ENCODE measurements at regions of chr11 and their contacts with region 1.

Region 1: DNA sequence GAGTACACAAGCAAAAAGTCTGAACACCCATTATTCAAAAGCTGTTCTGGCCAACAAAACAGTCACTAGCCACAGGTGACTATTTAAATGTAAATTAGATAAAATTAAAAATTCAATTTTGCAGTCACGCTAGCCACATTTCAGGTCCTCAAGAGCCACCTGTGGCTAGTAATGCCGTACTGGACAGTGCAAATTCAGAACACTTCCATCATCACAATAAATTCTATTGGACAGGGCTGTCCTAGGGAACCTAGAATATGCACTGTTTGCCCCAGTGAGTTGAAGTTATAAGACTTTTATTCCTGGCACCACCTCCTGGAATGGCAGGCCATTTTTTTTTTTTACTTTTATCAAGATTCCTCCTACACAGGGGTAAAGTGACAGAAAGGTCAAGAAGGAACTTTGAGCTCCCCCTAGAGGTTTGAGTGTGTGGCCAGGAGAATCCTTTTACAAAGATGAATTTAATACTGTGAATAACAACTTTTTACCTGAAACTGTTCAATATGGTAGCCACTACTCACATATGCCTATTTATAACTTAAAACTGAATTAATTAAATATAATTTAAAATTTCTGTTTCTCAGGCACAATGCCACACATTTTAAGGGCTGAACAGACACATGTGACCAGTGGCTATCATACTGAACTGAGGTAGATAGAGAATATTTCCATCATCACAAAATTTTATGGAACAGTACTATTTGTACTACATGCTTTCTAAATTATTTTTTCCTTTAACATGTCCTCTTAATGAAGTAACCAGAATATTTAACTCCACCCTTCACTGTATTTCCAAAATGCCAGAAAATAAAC is 6.5 kb downstream of the MSANTD2 start:
- DNase-seq: peak; percentile 31 to 76 (median 48)
- ATAC-seq: peak; percentile 93
- H3K4me3 ChIP-seq: no peak overlapping the region
- H3K27ac ChIP-seq: no peak overlapping the region
- H3K4me1 ChIP-seq: 0 out of 5 replicates have a peak, but pooled peaks cover 0 to 3% of the 10 kb centered on the region in 2 experiments
- H3K27me3 ChIP-seq: no peaks in the 10 kb centered on the region
- CTCF ChIP-seq: peak; percentile 59 to 86 (median 72); a peak in 5 of 6 replicates
- EP300 ChIP-seq: no peak; the same call in 1 of the 2 replicates
- POLR2A ChIP-seq: no peak
- RAD21 ChIP-seq: peak; percentile 67 to 74

Region 2: GRCh38 chr11:124605719-124606118 is 188.0 kb before region 1 on chr11:
- CTCF ChIA-PET with region 1: no interaction called
- POLR2A ChIA-PET with region 1: no interaction called
- in situ Hi-C with region 1: no loop called
- intact Hi-C with region 1: no loop called
- DNase-seq: no peak
- ATAC-seq: no peak
- H3K4me3 ChIP-seq: no peak overlapping the region
- H3K27ac ChIP-seq: no peak overlapping the region
- H3K4me1 ChIP-seq: no peaks in the 10 kb centered on the region; a peak in 2 of 5 replicates
- H3K27me3 ChIP-seq: no peaks in the 10 kb centered on the region
- CTCF ChIP-seq: no peak
- EP300 ChIP-seq: no peak
- POLR2A ChIP-seq: no peak
- RAD21 ChIP-seq: no peak

Region 3: DNA sequence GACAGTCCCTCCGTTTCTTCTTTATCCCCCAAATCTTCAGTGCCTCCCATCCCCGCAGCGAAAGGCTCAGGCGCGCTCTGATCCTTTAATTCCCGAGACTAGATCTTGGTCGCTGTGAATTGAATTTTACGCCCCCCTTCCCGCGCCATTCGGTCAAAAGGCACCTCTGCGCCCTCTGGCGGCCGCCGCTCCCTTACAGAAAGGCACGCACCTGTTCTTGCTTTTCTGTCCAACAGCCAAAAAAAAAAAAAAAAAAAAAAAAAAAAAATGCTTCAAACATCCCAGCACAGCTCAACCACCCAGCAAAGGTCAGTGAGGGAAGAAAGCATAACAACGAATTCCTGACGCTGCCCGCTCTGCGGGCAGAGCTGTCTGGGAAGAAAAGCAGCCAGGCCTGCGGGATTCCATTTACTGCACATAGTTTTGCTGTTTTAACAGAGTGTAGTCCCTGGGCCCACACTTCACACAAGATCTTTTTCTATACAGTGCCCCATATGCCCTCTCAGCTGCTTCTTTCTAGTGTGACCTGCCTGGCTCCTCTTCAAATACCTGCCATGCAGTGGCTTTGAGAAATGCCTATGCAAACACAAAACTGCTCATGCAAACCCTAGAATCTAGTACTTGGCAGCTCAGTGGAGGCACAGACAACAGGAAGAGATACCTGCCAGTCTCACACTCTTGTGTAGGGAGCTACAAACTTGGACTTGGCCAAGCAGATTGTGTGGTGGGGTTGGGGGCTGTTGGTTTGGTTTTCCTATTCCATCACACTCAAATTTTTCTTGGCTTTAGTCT is 30.3 kb before region 1 on chr11:
- CTCF ChIA-PET with region 1: interaction called, 5 read pairs
- POLR2A ChIA-PET with region 1: interaction called, 4 read pairs
- in situ Hi-C with region 1: no loop called
- intact Hi-C with region 1: loop called (anchors 1 kb)
- DNase-seq: peak; percentile 62 to 87 (median 66)
- ATAC-seq: peak; percentile 75
- H3K4me3 ChIP-seq: peak overlapping the region; percentile 46
- H3K27ac ChIP-seq: no peak overlapping the region
- H3K4me1 ChIP-seq: peaks cover 0 to 34% of the 10 kb centered on the region in 2 experiments; a peak in 4 of 5 replicates
- H3K27me3 ChIP-seq: peaks cover 0 to 22% of the 10 kb centered on the region in 2 experiments; a peak in 2 of 5 replicates
- CTCF ChIP-seq: peak; percentile 82 to 84 (median 84)
- EP300 ChIP-seq: no peak
- POLR2A ChIP-seq: no peak
- RAD21 ChIP-seq: peak; percentile 55 to 70

Region 4: DNA sequence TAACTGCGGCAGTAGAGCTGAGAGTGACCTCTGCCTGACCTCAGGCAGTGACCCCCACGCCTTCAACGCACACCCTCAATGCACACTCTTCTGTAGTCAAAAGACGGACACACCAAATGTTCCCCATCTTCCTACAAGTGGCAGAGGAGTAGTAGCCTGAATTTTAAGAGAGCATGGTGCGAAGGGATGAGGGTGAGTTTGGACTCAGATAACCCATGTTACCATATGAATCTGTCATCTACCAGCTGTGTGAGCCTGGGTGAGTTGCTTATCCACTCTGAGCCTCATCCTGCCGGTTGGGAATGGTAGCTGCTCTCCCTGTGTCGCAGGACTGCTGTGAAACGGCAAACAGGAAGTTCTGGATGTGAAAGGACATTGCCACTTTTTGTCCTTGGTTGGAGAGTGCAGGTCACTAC is 51.0 kb after region 1 on chr11:
- CTCF ChIA-PET with region 1: no interaction called
- POLR2A ChIA-PET with region 1: no interaction called
- in situ Hi-C with region 1: no loop called
- intact Hi-C with region 1: no loop called
- DNase-seq: no peak
- ATAC-seq: no peak
- H3K4me3 ChIP-seq: no peak overlapping the region
- H3K27ac ChIP-seq: no peak overlapping the region
- H3K4me1 ChIP-seq: peaks cover 3 to 8% of the 10 kb centered on the region in 2 experiments; a peak in 3 of 5 replicates
- H3K27me3 ChIP-seq: peaks cover 58 to 66% of the 10 kb centered on the region in 2 experiments
- CTCF ChIP-seq: no peak
- EP300 ChIP-seq: no peak
- POLR2A ChIP-seq: no peak
- RAD21 ChIP-seq: no peak

Region 5: DNA sequence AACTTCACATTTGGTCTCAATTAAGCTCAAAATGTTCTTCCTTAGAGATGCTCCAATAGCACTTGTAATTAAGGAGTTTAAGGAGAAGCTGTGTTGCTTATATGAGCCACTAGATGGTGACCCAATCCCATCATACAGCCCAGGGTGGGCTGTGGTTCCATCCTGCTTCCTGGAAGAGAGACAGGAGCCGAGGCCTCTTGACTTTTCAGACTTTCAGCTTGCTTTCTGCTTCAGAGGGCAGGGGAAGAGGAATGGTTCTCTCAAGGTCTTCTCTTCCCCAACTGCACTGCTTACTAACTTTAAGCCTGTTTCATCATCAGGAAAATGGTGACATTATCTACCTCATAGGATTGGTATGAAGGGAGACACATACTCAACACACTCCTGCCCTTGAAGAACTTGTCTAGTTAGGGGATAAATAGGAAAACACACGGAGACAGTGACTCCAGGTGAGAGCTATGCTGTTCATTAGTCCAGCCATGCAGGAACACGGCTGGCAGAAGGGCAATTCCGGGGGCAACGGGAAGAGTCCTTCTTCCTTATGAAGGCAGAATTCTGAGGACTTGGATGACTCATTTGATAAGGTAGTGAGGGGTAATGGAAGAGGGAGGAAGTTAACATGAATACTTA is 297.7 kb after region 1 on chr11:
- CTCF ChIA-PET with region 1: no interaction called
- POLR2A ChIA-PET with region 1: no interaction called
- in situ Hi-C with region 1: no loop called
- intact Hi-C with region 1: no loop called
- DNase-seq: peak; percentile 71 to 75 (median 72)
- ATAC-seq: peak; percentile 95
- H3K4me3 ChIP-seq: no peak overlapping the region
- H3K27ac ChIP-seq: no peak overlapping the region
- H3K4me1 ChIP-seq: peaks cover 0 to 7% of the 10 kb centered on the region in 2 experiments; a peak in 2 of 5 replicates
- H3K27me3 ChIP-seq: no peaks in the 10 kb centered on the region
- CTCF ChIP-seq: peak; percentile 65 to 81 (median 78)
- EP300 ChIP-seq: no peak
- POLR2A ChIP-seq: no peak
- RAD21 ChIP-seq: peak; percentile 71 to 84

Region 6: GRCh38 chr11:125532668-125533067 is 739.0 kb after region 1 on chr11:
- CTCF ChIA-PET with region 1: no interaction called
- POLR2A ChIA-PET with region 1: no interaction called
- in situ Hi-C with region 1: no loop called
- intact Hi-C with region 1: no loop called
- DNase-seq: peak; percentile 40 to 91 (median 68)
- ATAC-seq: peak; percentile 98
- H3K4me3 ChIP-seq: no peak overlapping the region
- H3K27ac ChIP-seq: peak overlapping the region; percentile 68; the same call in 2 of the 3 replicates
- H3K4me1 ChIP-seq: peaks cover 17 to 36% of the 10 kb centered on the region in 2 experiments
- H3K27me3 ChIP-seq: no peaks in the 10 kb centered on the region
- CTCF ChIP-seq: no peak
- EP300 ChIP-seq: peak; percentile 90
- POLR2A ChIP-seq: no peak
- RAD21 ChIP-seq: no peak; a peak in 1 of 4 replicates